Activated CD8-positive, alpha-beta T cell treated with anti-CD3 and anti-CD28 coated beads, Interleukin-2, amount 10 ng/mL, durations not matched to agents 7 days and 5 days (primary cell): ENCODE measurements at regions of chrX and their contacts with region 1.

Region 1: DNA sequence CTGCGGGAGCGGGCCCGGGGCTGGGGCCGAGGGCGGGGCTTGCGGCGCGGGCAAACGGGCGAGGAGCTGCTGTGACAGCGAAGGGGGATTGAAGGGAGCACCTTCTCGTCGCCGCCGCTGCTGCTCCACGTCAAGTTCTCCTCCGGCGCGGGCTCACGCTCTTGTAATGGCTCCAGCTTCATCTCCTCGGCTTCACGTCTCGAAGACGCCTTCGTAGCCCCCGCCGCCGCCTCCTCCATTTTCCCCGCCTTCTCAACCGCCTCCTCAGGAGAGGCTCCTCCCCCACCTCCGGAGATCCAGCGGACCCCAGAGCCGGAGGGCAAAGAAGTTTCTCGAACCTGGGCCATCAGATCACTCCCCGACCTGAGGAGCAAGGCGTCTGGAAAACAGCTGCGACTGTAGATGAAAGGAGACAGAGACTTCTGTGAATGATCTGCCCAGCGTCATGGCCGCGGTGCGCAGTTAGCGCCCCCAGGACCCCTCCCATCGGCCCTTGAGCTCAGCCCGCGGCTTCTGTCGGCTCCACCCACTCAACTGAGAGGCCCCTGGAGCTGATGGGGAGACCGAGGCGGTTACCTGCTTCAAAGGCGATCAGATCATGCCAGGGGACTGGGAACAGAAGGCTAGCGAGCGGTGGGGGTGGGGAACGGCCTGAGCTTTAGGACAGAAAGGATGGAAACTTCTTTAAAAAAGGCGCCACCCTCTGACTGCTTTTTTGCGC is 895 bp downstream of the USP51 start:
- DNase-seq: peak; percentile 73
- ATAC-seq: peak; percentile 85
- H3K4me3 Mint-ChIP-seq: peak overlapping the region; percentile 87
- H3K27ac Mint-ChIP-seq: peak overlapping the region; percentile 96
- H3K4me1 Mint-ChIP-seq: peaks cover 19% of the 10 kb centered on the region
- H3K27me3 Mint-ChIP-seq: no peaks in the 10 kb centered on the region

Region 2: GRCh38 chrX:55451990-55452832 is 36.5 kb before region 1 on chrX and contains the start of gene MAGEH1:
- CTCF ChIA-PET with region 1: interaction called, 9 read pairs
- POLR2A ChIA-PET with region 1: interaction called, 11 read pairs
- DNase-seq: peak; percentile 86
- ATAC-seq: peak; percentile 95
- H3K4me3 Mint-ChIP-seq: peak within 1 kb of the TSS; percentile 88
- H3K27ac Mint-ChIP-seq: peak within 1 kb of the TSS; percentile 86
- H3K4me1 Mint-ChIP-seq: peaks cover 11% of the 10 kb centered on the region
- H3K27me3 Mint-ChIP-seq: no peaks in the 10 kb centered on the region
- total RNA-seq, gene MAGEH1: 13.1 to 14.3 TPM